Naive thymus-derived CD4-positive, alpha-beta T cell (primary cell): ENCODE measurements at regions of chr5 and their contacts with region 1.

Region 1: DNA sequence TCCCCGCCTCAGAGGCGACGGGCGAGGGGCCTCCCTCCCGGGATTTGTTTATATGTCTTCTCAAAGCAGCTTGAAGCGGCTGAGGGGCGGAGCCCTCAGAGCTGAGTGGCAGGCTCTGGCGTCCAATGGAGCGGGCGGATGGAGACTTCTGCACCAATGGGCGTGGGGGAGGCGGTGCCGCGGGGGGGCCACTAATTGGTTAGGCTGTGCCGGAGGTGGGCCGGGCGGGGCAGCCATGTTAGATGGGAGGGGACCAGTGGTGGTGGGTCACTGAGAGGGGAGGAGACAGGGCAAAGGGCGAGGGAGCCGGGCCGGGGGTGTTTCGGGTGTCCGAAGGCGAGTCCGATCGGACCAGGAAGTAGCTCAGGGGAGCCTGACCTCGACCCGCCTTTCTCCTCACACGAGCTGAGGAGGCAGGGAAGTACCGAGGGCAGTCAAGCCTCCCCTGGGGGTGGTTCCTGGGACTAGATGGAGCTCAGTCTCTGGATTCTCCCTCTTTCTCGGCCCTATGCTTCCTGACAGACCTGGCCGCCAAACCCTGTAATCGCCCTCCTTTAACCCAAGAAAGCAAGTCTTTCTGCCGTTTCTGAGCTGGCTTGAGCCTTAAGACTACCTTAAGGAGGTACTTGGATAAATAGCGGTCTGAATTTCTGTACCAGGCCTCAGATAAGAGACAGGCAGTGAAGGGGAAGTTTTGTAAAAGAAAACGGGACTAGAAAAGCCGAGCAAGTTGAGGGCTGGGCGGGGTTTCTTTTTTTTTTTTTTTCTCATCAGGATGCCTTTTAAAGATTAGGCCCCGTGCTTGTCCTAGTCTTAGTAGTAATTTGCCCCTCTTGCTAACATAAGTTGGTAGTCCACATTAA is 1.1 kb downstream of the CREBRF start:
- DNase-seq: peak; percentile 96 to 99 (median 98)
- ATAC-seq: peak; percentile 90
- H3K4me3 ChIP-seq: peak overlapping the region; percentile 96
- H3K4me3 Mint-ChIP-seq: peak overlapping the region; percentile 91 to 97 (median 94)
- H3K27ac ChIP-seq: peak overlapping the region; percentile 97
- H3K27ac Mint-ChIP-seq: peak overlapping the region; percentile 90 to 96 (median 94)
- H3K4me1 ChIP-seq: peaks cover 22 to 33% of the 10 kb centered on the region in 2 donors
- H3K4me1 Mint-ChIP-seq: peaks cover 21 to 72% (median 59%) of the 10 kb centered on the region in 7 donors
- H3K27me3 ChIP-seq: peaks cover 0 to 5% of the 10 kb centered on the region in 2 donors
- H3K27me3 Mint-ChIP-seq: no peaks in the 10 kb centered on the region

Region 2: GRCh38 chr5:171387345-171387969 is 1669.8 kb before region 1 on chr5 and contains the start of gene NPM1:
- CTCF ChIA-PET with region 1: no interaction called
- POLR2A ChIA-PET with region 1: no interaction called
- intact Hi-C with region 1: loop called (anchors 2 to 5 kb)
- DNase-seq: peak; percentile 90 to 99 (median 98)
- ATAC-seq: peak; percentile 93
- H3K4me3 ChIP-seq: peak within 1 kb of the TSS; percentile 91
- H3K4me3 Mint-ChIP-seq: peak within 1 kb of the TSS; percentile 92 to 99 (median 98)
- H3K27ac ChIP-seq: peak within 1 kb of the TSS; percentile 88
- H3K27ac Mint-ChIP-seq: peak within 1 kb of the TSS; percentile 96 to 100 (median 98)
- H3K4me1 ChIP-seq: peaks cover 31 to 40% of the 10 kb centered on the region in 2 donors
- H3K4me1 Mint-ChIP-seq: peaks cover 25 to 52% (median 49%) of the 10 kb centered on the region in 7 donors
- H3K27me3 ChIP-seq: no peaks in the 10 kb centered on the region
- H3K27me3 Mint-ChIP-seq: peaks cover 0 to 6% (median 0%) of the 10 kb centered on the region in 5 donors
- total RNA-seq, gene NPM1: 807 to 1,238 (median 1,192) TPM

Region 3: DNA sequence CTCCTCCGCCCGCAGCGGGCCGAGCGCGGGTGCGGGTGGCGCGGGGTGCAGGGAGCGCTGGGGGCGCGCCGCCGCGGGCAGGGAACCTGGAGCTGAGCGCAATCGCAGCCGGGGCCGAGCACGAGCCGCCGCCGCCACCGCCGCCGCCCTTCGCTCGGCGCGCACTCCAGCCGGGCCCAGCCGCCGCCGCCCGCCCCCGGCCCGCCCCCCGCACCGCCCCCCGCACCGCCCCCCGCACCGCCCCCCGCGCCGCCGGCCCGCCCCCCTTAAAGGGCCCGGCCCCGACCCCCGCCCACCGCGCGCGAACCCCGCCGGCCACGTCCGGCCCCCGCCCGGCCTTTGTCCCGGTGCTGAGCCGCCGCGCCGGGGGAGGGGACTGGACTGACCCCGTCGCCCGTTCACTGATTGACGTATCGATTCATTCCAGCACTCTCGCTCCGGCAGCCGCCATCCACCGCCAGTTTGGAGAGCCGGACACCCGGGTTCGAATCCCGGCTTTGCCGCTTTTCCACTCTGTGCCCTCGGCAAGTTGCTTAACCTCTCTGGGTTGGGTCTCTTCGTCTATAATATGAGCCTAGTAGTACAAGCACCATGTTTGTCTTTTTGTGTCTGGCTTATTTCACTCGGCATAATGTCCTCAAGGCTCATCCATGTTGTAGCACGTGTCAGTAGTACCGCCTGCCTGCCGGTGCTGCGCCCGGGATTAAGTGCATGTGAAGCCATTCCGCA is 602.8 kb before region 1 on chr5 and contains the start of gene SH3PXD2B:
- CTCF ChIA-PET with region 1: no interaction called
- POLR2A ChIA-PET with region 1: no interaction called
- intact Hi-C with region 1: loop called in 1 of 2 experiments (anchors 2 kb)
- DNase-seq: peak in 7 of 9 donors; percentile 11 to 52 (median 47)
- ATAC-seq: peak; percentile 73
- H3K4me3 ChIP-seq: peak within 1 kb of the TSS; percentile 36
- H3K4me3 Mint-ChIP-seq: peak within 1 kb of the TSS; percentile 82 to 93 (median 86)
- H3K27ac ChIP-seq: no peak within 1 kb of the TSS
- H3K27ac Mint-ChIP-seq: peak within 1 kb of the TSS in 7 of 9 donors; percentile 39 to 66 (median 52)
- H3K4me1 ChIP-seq: no peaks in the 10 kb centered on the region
- H3K4me1 Mint-ChIP-seq: peaks cover 8 to 17% (median 13%) of the 10 kb centered on the region in 7 donors
- H3K27me3 ChIP-seq: peaks cover 0 to 4% of the 10 kb centered on the region in 2 donors
- H3K27me3 Mint-ChIP-seq: peaks cover 12 to 59% (median 39%) of the 10 kb centered on the region in 5 donors
- total RNA-seq, gene SH3PXD2B: 0.15 to 1.1 (median 0.34) TPM

Region 4: GRCh38 chr5:172910828-172911627 is 146.3 kb before region 1 on chr5:
- CTCF ChIA-PET with region 1: no interaction called
- POLR2A ChIA-PET with region 1: no interaction called
- intact Hi-C with region 1: no loop called
- DNase-seq: no peak
- ATAC-seq: peak; percentile 77
- H3K4me3 ChIP-seq: no peak overlapping the region
- H3K4me3 Mint-ChIP-seq: no peak overlapping the region
- H3K27ac ChIP-seq: no peak overlapping the region
- H3K27ac Mint-ChIP-seq: no peak overlapping the region
- H3K4me1 ChIP-seq: no peaks in the 10 kb centered on the region
- H3K4me1 Mint-ChIP-seq: peaks cover 0 to 3% (median 0%) of the 10 kb centered on the region in 7 donors
- H3K27me3 ChIP-seq: no peaks in the 10 kb centered on the region
- H3K27me3 Mint-ChIP-seq: no peaks in the 10 kb centered on the region

Region 5: DNA sequence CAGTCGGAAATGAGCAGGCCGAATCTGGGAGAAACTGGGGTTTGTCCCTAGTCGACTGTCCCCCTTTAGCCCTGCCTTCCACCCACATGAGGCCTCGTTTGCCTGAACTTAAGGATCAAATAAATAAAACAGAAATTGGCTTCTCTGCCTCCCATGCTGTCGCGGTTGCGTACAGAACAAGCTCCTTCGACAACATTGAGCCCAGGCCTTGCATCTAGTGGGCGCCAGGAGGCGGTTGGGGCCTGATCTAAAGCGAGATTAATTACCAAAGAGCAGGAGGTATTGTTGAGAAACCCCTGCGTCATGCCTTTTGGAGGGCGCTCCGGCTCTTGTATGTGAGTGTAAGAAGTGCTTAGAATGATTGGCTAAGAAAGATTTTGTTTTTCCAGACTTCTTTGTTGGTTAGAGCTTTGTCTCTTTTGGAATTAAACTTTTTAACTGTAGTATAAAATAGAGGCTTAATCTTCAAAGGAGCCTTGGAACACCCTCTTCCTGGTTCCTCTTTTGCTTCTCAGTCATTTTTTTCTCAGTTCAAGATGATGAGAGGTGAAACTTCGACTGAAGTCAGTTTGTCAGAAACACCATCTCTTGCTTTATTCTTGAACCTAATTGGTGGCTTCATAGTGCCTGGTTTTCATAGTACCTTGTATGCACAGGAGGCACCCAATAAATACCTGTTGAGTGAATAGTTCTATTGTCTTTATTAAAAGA is 72.9 kb before region 1 on chr5:
- CTCF ChIA-PET with region 1: interaction called, 8 read pairs
- POLR2A ChIA-PET with region 1: interaction called, 42 read pairs
- intact Hi-C with region 1: loop called (anchors 1 kb)
- DNase-seq: peak; percentile 47 to 90 (median 82)
- ATAC-seq: peak; percentile 86
- H3K4me3 ChIP-seq: peak overlapping the region; percentile 64
- H3K4me3 Mint-ChIP-seq: peak overlapping the region; percentile 88 to 99 (median 97)
- H3K27ac ChIP-seq: peak overlapping the region; percentile 92
- H3K27ac Mint-ChIP-seq: peak overlapping the region; percentile 92 to 99 (median 98)
- H3K4me1 ChIP-seq: peaks cover 16 to 26% of the 10 kb centered on the region in 2 donors
- H3K4me1 Mint-ChIP-seq: peaks cover 20 to 71% (median 48%) of the 10 kb centered on the region in 7 donors
- H3K27me3 ChIP-seq: no peaks in the 10 kb centered on the region
- H3K27me3 Mint-ChIP-seq: no peaks in the 10 kb centered on the region

Region 6: DNA sequence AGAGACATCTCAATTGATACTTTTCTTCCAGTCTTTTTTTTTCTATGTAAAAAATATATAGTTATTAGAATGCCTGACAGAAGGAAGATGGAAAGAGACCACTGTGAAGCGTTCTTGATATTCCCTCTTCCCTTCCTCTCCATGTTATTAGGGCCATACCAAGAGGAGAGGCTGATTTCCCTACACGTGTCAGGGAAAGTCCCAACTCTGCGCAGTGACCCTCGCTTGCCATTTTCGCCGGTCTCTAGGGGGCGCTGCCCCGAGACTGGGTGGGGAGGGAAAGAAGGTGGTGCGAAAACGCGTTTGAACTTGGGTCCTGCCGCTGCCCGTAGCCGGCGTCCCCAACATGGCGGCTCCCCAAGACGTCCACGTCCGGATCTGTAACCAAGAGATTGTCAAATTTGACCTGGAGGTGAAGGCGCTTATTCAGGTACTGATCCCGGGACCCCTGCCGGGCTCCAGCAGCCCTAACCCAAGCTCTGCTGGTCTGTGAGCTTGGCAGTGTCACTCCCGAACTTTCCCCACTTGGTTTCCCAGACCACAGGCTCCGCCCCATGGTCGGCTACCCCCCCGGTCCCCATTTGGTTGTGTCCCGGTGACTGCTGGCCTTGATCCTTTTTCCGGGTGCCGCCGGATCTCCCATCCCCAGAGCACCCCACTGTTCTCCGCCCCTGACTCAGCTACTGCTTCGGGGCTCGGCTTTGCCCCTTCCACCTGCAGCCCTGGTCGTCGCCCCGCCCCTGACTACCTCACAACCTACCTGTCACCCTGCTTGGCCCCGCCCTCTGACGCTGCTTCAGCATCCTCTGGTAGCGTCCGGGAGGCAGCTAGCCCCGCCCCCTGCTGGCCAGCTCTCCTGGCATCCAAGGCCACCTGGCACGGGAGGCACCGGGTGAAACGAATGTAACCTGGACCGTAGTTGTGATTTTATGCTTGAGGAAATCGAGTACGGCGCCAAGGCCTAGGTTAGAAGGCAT is 87.2 kb after region 1 on chr5 and contains the start of gene BNIP1:
- CTCF ChIA-PET with region 1: interaction called, 4 read pairs
- POLR2A ChIA-PET with region 1: interaction called, 11 read pairs
- intact Hi-C with region 1: loop called (anchors 1 kb)
- DNase-seq: peak; percentile 92 to 99 (median 96)
- ATAC-seq: peak; percentile 94
- H3K4me3 ChIP-seq: peak within 1 kb of the TSS; percentile 100
- H3K4me3 Mint-ChIP-seq: peak within 1 kb of the TSS; percentile 93 to 99 (median 97)
- H3K27ac ChIP-seq: peak within 1 kb of the TSS; percentile 98
- H3K27ac Mint-ChIP-seq: peak within 1 kb of the TSS; percentile 96 to 99 (median 98)
- H3K4me1 ChIP-seq: no peaks in the 10 kb centered on the region
- H3K4me1 Mint-ChIP-seq: peaks cover 5 to 21% (median 16%) of the 10 kb centered on the region in 7 donors
- H3K27me3 ChIP-seq: no peaks in the 10 kb centered on the region
- H3K27me3 Mint-ChIP-seq: no peaks in the 10 kb centered on the region
- total RNA-seq, gene BNIP1: 5.5 to 23.2 (median 15.3) TPM

Region 7: DNA sequence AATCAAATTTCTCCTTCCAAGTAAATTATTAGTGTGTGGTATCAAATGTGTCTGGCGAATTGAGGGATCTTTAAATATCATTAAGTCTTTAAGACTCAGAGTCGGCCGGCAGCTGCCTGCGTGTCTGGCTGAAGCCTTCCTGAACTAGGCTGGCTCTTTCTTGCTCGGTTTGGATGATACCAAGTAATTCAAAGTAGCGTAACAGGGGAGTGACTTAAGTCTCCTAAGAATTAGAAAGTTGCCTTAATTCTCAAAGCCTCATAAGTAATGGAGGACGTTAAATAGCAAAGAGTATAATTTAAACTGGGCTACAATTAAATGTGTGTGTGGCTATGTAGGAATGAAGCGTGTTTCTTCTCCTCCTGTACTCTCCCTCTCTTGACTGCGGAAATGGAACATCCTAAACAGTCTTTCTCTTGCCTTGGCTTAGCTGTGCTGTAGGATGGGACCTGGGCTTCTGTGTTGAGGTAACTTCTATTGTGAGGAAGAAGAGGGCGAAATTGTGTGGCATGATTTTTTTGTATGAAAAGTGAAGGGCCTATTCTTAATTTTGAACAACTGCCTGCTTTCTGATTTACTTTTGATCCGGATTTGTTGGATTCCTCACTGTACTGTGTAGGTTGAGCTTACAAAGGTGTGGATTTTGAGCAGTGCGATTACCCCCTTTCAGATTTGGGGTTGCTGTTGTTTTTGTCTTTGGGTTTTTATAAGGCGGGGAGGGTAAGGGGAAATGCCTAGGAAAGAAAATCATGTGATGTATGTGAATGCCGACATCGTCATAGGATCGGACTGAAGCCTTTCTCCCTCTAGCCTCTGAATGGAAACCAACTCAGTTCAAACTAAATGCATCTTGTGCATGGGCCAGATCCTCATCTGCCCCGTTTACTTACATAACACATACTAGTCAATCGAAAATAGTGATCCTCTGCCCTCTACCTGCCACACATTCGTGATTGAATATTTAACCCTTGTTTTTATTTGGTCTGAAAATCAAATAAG is 860.8 kb after region 1 on chr5:
- CTCF ChIA-PET with region 1: no interaction called
- POLR2A ChIA-PET with region 1: no interaction called
- intact Hi-C with region 1: loop called in 1 of 2 experiments (anchors 1 kb)
- DNase-seq: peak; percentile 14 to 89 (median 78)
- ATAC-seq: peak; percentile 92
- H3K4me3 ChIP-seq: peak overlapping the region; percentile 65
- H3K4me3 Mint-ChIP-seq: no peak overlapping the region
- H3K27ac ChIP-seq: peak overlapping the region; percentile 82
- H3K27ac Mint-ChIP-seq: no peak overlapping the region
- H3K4me1 ChIP-seq: peaks cover 4 to 11% of the 10 kb centered on the region in 2 donors
- H3K4me1 Mint-ChIP-seq: peaks cover 0 to 21% (median 6%) of the 10 kb centered on the region in 7 donors
- H3K27me3 ChIP-seq: no peaks in the 10 kb centered on the region
- H3K27me3 Mint-ChIP-seq: no peaks in the 10 kb centered on the region